GM12878 (cell line): ENCODE measurements at regions of chr2 and their contacts with region 1.

Region 1: GRCh38 chr2:159968279-159968900 is 94.0 kb downstream of the PLA2R1 start:
- DNase-seq: no peak
- ATAC-seq: peak; percentile 66
- H3K4me3 ChIP-seq: no peak overlapping the region
- H3K27ac ChIP-seq: no peak overlapping the region
- H3K4me1 ChIP-seq: peaks cover 4% of the 10 kb centered on the region; the same call in 1 of the 2 replicates
- H3K27me3 ChIP-seq: no peaks in the 10 kb centered on the region
- CTCF ChIP-seq: peak; percentile 59 to 92 (median 67); a peak in 5 of 6 replicates
- EP300 ChIP-seq: no peak
- POLR2A ChIP-seq: no peak
- RAD21 ChIP-seq: peak; percentile 92

Region 2: GRCh38 chr2:159146996-159147666 is 821.3 kb before region 1 on chr2:
- CTCF ChIA-PET with region 1: no interaction called
- POLR2A ChIA-PET with region 1: no interaction called
- RAD21 ChIA-PET with region 1: no interaction called
- SMC1A ChIA-PET with region 1: no interaction called
- in situ Hi-C with region 1: no loop called
- intact Hi-C with region 1: loop called (anchors 10 kb)
- DNase-seq: no peak
- ATAC-seq: no peak; the same call in 2 of the 3 replicates
- H3K4me3 ChIP-seq: no peak overlapping the region
- H3K27ac ChIP-seq: no peak overlapping the region
- H3K4me1 ChIP-seq: peaks cover 12% of the 10 kb centered on the region
- H3K27me3 ChIP-seq: no peaks in the 10 kb centered on the region
- CTCF ChIP-seq: no peak
- EP300 ChIP-seq: no peak
- POLR2A ChIP-seq: no peak
- RAD21 ChIP-seq: no peak

Region 3: GRCh38 chr2:159615140-159615951 is 353.0 kb before region 1 on chr2:
- CTCF ChIA-PET with region 1: interaction called, 4 read pairs
- POLR2A ChIA-PET with region 1: no interaction called
- RAD21 ChIA-PET with region 1: interaction called, 4 read pairs
- SMC1A ChIA-PET with region 1: no interaction called
- in situ Hi-C with region 1: no loop called
- intact Hi-C with region 1: loop called (anchors 10 kb)
- DNase-seq: peak; percentile 46
- ATAC-seq: peak; percentile 85
- H3K4me3 ChIP-seq: peak overlapping the region; percentile 70
- H3K27ac ChIP-seq: peak overlapping the region; percentile 73
- H3K4me1 ChIP-seq: no peaks in the 10 kb centered on the region; the same call in 1 of the 2 replicates
- H3K27me3 ChIP-seq: no peaks in the 10 kb centered on the region
- CTCF ChIP-seq: no peak
- EP300 ChIP-seq: no peak
- POLR2A ChIP-seq: peak; percentile 78
- RAD21 ChIP-seq: peak; percentile 25; the same call in 1 of the 2 replicates

Region 4: DNA sequence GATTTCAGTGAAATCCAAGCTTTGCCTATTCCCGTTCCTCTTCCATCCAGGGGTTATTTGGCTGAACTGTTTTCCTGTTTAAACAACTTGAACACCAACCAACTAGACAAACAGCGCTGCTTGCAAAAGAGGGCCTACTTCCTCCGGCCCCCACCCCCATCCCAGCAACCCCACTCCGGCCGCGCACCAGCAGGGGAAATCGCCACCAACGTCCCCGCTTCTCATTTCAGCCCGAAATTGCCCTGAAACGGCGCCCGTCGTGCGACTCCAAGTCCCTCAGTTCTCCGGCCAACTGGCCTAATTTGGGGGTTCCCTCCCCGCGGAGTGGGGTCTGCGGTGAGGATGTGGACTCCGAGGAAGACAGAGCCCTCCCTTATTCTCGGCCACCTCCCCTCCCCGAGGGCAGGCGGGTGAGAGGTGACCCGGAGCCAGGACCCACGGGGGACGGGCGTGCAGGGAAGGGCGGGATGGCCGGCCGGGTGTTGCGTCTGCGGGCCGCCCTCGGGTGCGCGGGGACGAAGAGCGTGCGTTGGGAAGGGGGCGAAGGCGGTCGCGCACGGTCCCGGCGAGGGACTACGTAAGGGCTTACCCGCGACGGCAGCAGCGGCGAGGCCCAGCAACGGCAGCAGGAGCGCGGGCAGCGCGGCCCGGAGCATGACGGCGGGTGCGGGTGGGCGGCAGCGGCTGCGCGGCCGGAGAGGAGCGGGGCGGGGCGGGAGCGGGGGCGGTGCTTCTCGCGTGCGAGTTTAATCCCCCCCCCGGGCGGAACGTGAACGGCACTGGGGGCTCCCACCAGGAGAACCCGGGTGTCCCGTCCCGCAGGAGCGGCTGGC is 170.6 kb before region 1 on chr2 and contains the start of gene CD302:
- CTCF ChIA-PET with region 1: no interaction called
- POLR2A ChIA-PET with region 1: no interaction called
- RAD21 ChIA-PET with region 1: no interaction called
- SMC1A ChIA-PET with region 1: interaction called, 4 read pairs
- in situ Hi-C with region 1: no loop called
- intact Hi-C with region 1: loop called (anchors 5 kb)
- DNase-seq: no peak
- ATAC-seq: peak; percentile 85
- H3K4me3 ChIP-seq: peak within 1 kb of the TSS; percentile 77
- H3K27ac ChIP-seq: no peak within 1 kb of the TSS
- H3K4me1 ChIP-seq: no peaks in the 10 kb centered on the region
- H3K27me3 ChIP-seq: no peaks in the 10 kb centered on the region
- CTCF ChIP-seq: no peak
- EP300 ChIP-seq: no peak
- POLR2A ChIP-seq: peak; percentile 71
- RAD21 ChIP-seq: no peak
- polyA plus RNA-seq, gene CD302: 0.48 to 0.64 TPM

Region 5: GRCh38 chr2:159946326-159946999 is 21.9 kb before region 1 on chr2:
- CTCF ChIA-PET with region 1: interaction called, 27 read pairs
- POLR2A ChIA-PET with region 1: no interaction called
- RAD21 ChIA-PET with region 1: interaction called, 28 read pairs
- SMC1A ChIA-PET with region 1: interaction called, 12 read pairs
- in situ Hi-C with region 1: no loop called
- intact Hi-C with region 1: no loop called
- DNase-seq: no peak
- ATAC-seq: no peak
- H3K4me3 ChIP-seq: no peak overlapping the region
- H3K27ac ChIP-seq: no peak overlapping the region
- H3K4me1 ChIP-seq: no peaks in the 10 kb centered on the region
- H3K27me3 ChIP-seq: no peaks in the 10 kb centered on the region
- CTCF ChIP-seq: no peak
- EP300 ChIP-seq: no peak
- POLR2A ChIP-seq: no peak
- RAD21 ChIP-seq: no peak

Region 6: DNA sequence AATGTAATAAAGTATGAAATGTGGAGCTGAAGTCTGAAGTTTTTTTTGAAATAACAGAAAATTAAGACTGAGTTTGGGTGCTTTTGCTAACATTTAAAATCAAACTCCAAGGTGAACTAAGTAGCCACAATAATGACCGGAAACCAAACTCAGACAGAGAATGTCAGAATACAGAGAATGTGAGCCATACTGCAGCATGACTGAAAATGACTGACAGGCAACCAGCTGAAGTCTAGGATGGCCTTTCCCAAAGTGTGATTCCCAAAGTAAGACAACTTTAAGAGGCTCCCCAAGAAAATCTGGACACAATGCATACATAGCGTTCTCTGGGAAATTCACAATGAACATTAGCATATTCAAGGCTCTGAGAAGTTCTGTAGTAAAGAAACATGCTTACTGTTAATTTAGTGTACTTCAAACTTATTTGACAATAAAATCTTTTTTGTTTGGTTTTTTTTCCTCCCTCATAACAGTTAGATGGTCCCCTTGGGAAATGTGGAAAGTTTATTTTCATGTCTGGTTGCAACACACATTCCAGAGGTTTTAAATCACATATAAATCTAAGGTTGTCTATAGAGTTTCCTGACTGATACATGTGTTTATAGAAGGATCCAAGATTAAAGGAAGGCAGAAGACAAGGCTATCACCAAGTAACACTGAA is 65.5 kb after region 1 on chr2:
- CTCF ChIA-PET with region 1: no interaction called
- POLR2A ChIA-PET with region 1: no interaction called
- RAD21 ChIA-PET with region 1: no interaction called
- SMC1A ChIA-PET with region 1: no interaction called
- in situ Hi-C with region 1: no loop called
- intact Hi-C with region 1: no loop called
- DNase-seq: no peak
- ATAC-seq: no peak
- H3K4me3 ChIP-seq: no peak overlapping the region
- H3K27ac ChIP-seq: no peak overlapping the region
- H3K4me1 ChIP-seq: no peaks in the 10 kb centered on the region
- H3K27me3 ChIP-seq: no peaks in the 10 kb centered on the region
- CTCF ChIP-seq: no peak
- EP300 ChIP-seq: no peak
- POLR2A ChIP-seq: no peak
- RAD21 ChIP-seq: no peak